ENCODE measurements at regions of chr9 and their contacts with region 1.

Region 1: DNA sequence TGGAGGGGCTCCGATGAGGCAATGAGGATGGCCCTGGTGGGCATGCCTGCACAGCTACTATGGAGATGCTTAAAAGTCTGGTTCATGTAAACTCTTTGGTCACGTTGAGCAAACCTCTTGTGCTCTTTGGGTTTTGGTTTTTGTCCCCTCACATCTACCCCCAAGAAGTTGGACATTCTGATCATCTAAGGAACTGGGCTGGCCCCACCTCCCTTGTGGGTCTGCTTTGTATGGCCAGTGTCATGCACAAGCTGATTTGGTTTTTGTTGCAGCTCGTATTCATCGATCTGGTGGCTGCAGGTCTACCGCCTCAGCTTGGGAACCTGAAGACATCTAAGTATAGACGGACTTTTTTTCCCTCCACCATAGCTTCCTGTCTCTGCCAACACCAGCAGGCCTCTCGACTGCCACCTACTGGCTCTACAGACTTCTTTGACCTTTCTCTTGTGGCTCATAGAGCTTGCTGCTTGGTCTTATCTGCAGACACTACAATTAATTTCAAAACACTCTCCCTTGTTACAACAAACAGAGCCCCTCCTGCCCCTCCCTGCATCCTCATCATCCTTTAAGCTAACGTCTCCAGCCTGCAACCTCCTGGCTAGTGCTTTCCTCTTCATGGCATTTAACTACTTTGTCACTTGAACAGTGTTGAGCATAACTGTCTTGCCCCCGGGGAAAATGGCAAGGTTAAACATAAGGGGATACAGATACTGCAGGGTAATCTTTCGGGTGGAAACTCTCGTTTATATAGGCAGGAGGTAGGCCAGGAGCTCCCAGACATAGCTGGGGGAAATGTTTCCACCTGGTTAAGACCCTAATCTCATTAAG is 34.5 kb downstream of the TSTD2 start:
- DNase-seq: peak; percentile 46
- ATAC-seq: peak; percentile 95
- H3K4me3 ChIP-seq: no peak overlapping the region
- H3K27ac ChIP-seq: no peak overlapping the region
- H3K4me1 ChIP-seq: peaks cover 0 to 3% of the 10 kb centered on the region in 2 experiments; a peak in 1 of 4 replicates
- H3K27me3 ChIP-seq: no peaks in the 10 kb centered on the region
- CTCF ChIP-seq: peak; percentile 82 to 91 (median 88)
- POLR2A ChIP-seq: no peak
- RAD21 ChIP-seq: peak; percentile 79

Region 2: DNA sequence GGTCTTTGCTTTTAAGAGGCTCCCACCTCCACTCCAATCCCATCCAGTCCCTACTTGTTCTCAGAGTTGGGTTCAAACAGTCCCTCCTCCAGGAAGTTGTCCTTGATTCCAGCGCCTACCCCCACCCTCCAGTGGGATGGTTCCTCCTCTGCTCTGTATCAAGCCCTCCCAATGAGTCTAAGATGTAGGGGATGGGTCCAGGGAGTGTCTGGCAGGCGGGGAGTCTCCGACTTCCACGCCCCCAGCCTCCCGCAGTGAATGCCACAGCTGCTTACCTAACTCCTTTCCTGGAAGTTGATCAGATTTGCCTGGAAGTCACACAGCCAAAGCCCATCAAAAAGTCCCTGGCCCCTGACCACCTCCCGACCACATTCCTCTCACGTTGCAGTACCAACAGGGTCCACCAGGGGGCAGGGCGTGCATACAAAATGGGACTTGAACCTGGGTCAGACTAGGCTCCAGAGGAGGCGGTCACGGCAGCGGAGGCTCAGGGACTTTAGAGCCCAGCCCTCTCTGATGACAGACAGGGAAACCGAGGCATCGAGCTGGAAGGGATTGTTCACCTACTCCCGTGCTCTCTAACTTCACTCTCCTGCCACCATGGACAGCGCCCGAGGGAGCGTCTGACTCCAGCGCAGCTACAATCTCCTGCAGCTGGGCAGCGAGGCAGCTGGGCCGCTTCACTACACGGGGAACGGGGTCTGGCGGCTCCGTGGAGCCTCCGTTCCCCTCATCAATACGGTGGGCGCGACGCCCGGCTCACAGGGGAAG is 211.8 kb before region 1 on chr9:
- CTCF ChIA-PET with region 1: interaction called, 4 read pairs
- POLR2A ChIA-PET with region 1: no interaction called
- RAD21 ChIA-PET with region 1: no interaction called
- intact Hi-C with region 1: loop called (anchors 1 kb)
- DNase-seq: peak; percentile 22
- ATAC-seq: peak; percentile 85
- H3K4me3 ChIP-seq: no peak overlapping the region
- H3K27ac ChIP-seq: no peak overlapping the region
- H3K4me1 ChIP-seq: peaks cover 3 to 19% of the 10 kb centered on the region in 2 experiments; a peak in 3 of 4 replicates
- H3K27me3 ChIP-seq: no peaks in the 10 kb centered on the region
- CTCF ChIP-seq: peak; percentile 77 to 99 (median 96)
- POLR2A ChIP-seq: no peak
- RAD21 ChIP-seq: peak; percentile 93

Region 3: DNA sequence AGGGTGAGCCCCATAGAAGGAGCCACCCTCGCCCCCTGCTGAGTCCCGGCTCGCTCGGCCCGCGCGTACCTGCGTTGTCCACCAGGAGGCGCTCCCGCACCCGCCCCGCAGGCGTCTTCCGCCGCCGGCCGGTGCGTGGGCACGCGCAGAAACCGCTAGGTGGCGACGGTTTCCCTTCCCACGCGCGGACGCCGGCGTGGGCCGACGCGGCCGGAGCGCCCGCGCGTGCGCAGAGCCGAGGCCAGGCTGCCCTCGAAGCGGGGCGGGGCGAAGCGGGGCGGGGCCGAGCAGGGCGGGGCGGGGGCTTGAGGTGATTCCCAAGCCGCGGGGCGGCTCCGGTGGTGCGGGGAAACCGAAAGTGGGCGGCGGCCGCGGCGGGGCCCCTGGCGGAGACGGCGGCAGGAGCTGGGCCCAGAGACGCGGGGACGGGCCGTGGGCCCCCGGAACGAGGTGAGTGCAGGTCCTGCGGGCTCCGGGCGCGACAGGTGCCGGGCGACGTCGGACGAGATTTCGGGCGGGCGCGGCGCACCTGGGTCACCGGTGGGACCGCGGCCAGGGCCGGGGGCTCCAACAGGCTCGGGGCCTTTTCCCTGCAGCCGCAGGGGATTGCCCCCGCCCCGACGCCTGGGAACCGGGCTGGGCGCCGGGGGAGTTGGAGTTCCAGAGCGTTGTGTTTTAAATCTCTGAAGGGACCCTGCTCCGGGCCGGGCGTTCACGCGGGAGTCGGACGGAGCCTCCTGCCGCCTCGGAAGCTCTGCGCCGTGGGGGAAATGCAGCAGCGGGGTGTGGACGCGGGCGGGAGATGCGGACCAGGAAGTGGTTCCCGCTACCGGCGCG is 186.7 kb before region 1 on chr9 and contains the start of gene TDRD7:
- CTCF ChIA-PET with region 1: interaction called, 4 read pairs
- POLR2A ChIA-PET with region 1: no interaction called
- RAD21 ChIA-PET with region 1: no interaction called
- intact Hi-C with region 1: loop called (anchors 2 kb)
- DNase-seq: peak; percentile 61
- ATAC-seq: peak; percentile 90
- H3K4me3 ChIP-seq: peak within 1 kb of the TSS; percentile 63 to 69
- H3K27ac ChIP-seq: peak within 1 kb of the TSS; percentile 47; the same call in 1 of the 2 replicates
- H3K4me1 ChIP-seq: peaks cover 0 to 12% of the 10 kb centered on the region in 2 experiments; a peak in 2 of 4 replicates
- H3K27me3 ChIP-seq: no peaks in the 10 kb centered on the region
- CTCF ChIP-seq: peak; percentile 84 to 99 (median 98)
- POLR2A ChIP-seq: no peak
- RAD21 ChIP-seq: peak; percentile 71
- total RNA-seq, gene TDRD7: 8.0 TPM

Region 4: GRCh38 chr9:97468658-97469448 is 129.8 kb before region 1 on chr9:
- CTCF ChIA-PET with region 1: interaction called, 117 read pairs
- POLR2A ChIA-PET with region 1: interaction called, 7 read pairs
- RAD21 ChIA-PET with region 1: interaction called, 11 to 20 read pairs
- intact Hi-C with region 1: loop called (anchors 1 kb)
- DNase-seq: peak; percentile 28
- ATAC-seq: peak; percentile 98
- H3K4me3 ChIP-seq: no peak overlapping the region
- H3K27ac ChIP-seq: no peak overlapping the region
- H3K4me1 ChIP-seq: no peaks in the 10 kb centered on the region
- H3K27me3 ChIP-seq: no peaks in the 10 kb centered on the region
- CTCF ChIP-seq: peak; percentile 68 to 87 (median 72); a peak in 5 of 6 replicates
- POLR2A ChIP-seq: no peak
- RAD21 ChIP-seq: peak; percentile 91

Region 5: GRCh38 chr9:97487107-97487506 is 111.6 kb before region 1 on chr9:
- CTCF ChIA-PET with region 1: interaction called, 12 read pairs
- POLR2A ChIA-PET with region 1: no interaction called
- RAD21 ChIA-PET with region 1: no interaction called
- intact Hi-C with region 1: no loop called
- DNase-seq: no peak
- ATAC-seq: peak; percentile 84
- H3K4me3 ChIP-seq: no peak overlapping the region
- H3K27ac ChIP-seq: no peak overlapping the region
- H3K4me1 ChIP-seq: no peaks in the 10 kb centered on the region
- H3K27me3 ChIP-seq: no peaks in the 10 kb centered on the region
- CTCF ChIP-seq: peak in 2 of 3 experiments; percentile 60 to 62; a peak in 4 of 6 replicates
- POLR2A ChIP-seq: no peak
- RAD21 ChIP-seq: peak; percentile 22; the same call in 1 of the 2 replicates

Region 6: GRCh38 chr9:97501177-97501971 is 97.3 kb before region 1 on chr9 and contains the start of gene TMOD1:
- CTCF ChIA-PET with region 1: interaction called, 10 read pairs
- POLR2A ChIA-PET with region 1: interaction called, 4 read pairs
- RAD21 ChIA-PET with region 1: interaction called in 1 of 2 experiments, 5 read pairs
- intact Hi-C with region 1: loop called (anchors 1 kb)
- DNase-seq: peak; percentile 23
- ATAC-seq: peak; percentile 95
- H3K4me3 ChIP-seq: peak within 1 kb of the TSS; percentile 57 to 70
- H3K27ac ChIP-seq: peak within 1 kb of the TSS; percentile 48; the same call in 1 of the 2 replicates
- H3K4me1 ChIP-seq: peaks cover 0 to 16% of the 10 kb centered on the region in 2 experiments; a peak in 1 of 4 replicates
- H3K27me3 ChIP-seq: peaks cover 5% of the 10 kb centered on the region; the same call in 1 of the 2 replicates
- CTCF ChIP-seq: peak; percentile 19 to 26 (median 22); a peak in 4 of 6 replicates
- POLR2A ChIP-seq: no peak
- RAD21 ChIP-seq: peak; percentile 31
- total RNA-seq, gene TMOD1: 4.4 TPM

Region 7: GRCh38 chr9:97615439-97616072 is 16.9 kb after region 1 on chr9:
- CTCF ChIA-PET with region 1: interaction called, 18 read pairs
- POLR2A ChIA-PET with region 1: no interaction called
- RAD21 ChIA-PET with region 1: interaction called in 1 of 2 experiments, 4 read pairs
- intact Hi-C with region 1: no loop called
- DNase-seq: peak; percentile 29
- ATAC-seq: peak; percentile 81
- H3K4me3 ChIP-seq: no peak overlapping the region
- H3K27ac ChIP-seq: no peak overlapping the region
- H3K4me1 ChIP-seq: no peaks in the 10 kb centered on the region
- H3K27me3 ChIP-seq: no peaks in the 10 kb centered on the region
- CTCF ChIP-seq: peak; percentile 76 to 89 (median 83); a peak in 5 of 6 replicates
- POLR2A ChIP-seq: no peak
- RAD21 ChIP-seq: peak; percentile 84

Measured in HCT116 (cell line).